Activated CD4-positive, alpha-beta T cell treated with anti-CD3 and anti-CD28 coated beads, Interleukin-2, amount 10 ng/mL, durations not matched to agents 24 days and 14 days (primary cell): ENCODE measurements at regions of chr15 and their contacts with region 1.

Region 1: GRCh38 chr15:51162865-51163762 is 68.4 kb upstream of the TNFAIP8L3 start:
- DNase-seq: peak; percentile 88
- H3K4me3 Mint-ChIP-seq: no peak overlapping the region
- H3K27ac Mint-ChIP-seq: no peak overlapping the region
- H3K4me1 Mint-ChIP-seq: peaks cover 6% of the 10 kb centered on the region
- H3K27me3 Mint-ChIP-seq: peaks cover 8% of the 10 kb centered on the region

Region 2: GRCh38 chr15:51192521-51193280 is 29.6 kb after region 1 on chr15:
- intact Hi-C with region 1: loop called (anchors 1 kb)
- DNase-seq: peak; percentile 93
- H3K4me3 Mint-ChIP-seq: no peak overlapping the region
- H3K27ac Mint-ChIP-seq: no peak overlapping the region
- H3K4me1 Mint-ChIP-seq: no peaks in the 10 kb centered on the region
- H3K27me3 Mint-ChIP-seq: peaks cover 34% of the 10 kb centered on the region

Region 3: GRCh38 chr15:51281368-51281967 is 118.4 kb after region 1 on chr15:
- intact Hi-C with region 1: loop called (anchors 2 kb)
- DNase-seq: peak; percentile 69
- H3K4me3 Mint-ChIP-seq: no peak overlapping the region
- H3K27ac Mint-ChIP-seq: no peak overlapping the region
- H3K4me1 Mint-ChIP-seq: peaks cover 10% of the 10 kb centered on the region
- H3K27me3 Mint-ChIP-seq: peaks cover 15% of the 10 kb centered on the region

Region 4: DNA sequence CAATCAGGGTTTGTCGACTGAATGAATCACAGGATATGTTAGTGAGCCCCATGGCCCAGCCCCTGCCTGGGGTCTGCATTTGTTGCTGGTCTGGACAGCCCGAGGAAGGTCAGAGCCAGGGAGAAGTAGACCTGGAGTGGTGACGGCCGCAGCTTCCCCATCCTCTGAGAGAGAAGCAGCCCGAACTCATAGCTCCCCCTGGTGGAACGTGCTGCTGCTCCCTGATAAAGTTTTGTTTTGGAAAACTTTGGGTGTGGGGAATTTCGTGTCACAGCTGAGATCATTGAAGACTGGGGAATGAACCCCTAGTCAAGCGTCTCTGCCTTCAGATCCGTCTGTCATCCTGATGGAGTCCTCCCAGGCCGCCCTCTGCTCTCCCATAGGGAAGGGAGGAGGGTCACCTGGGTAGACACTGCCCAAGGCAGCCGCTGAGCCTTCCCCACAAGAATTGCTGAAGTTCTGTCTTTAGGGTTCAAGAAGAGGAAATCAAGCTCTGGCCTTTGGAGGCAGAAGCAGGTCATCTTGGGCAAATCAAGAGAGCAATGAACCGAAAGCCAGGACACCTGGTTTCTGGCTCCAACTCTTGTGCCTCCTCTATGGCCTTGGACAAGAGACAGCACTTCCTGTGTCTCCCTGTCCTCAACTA is 238.9 kb after region 1 on chr15:
- intact Hi-C with region 1: loop called (anchors 2 kb)
- DNase-seq: no peak
- H3K4me3 Mint-ChIP-seq: no peak overlapping the region
- H3K27ac Mint-ChIP-seq: no peak overlapping the region
- H3K4me1 Mint-ChIP-seq: no peaks in the 10 kb centered on the region
- H3K27me3 Mint-ChIP-seq: peaks cover 22% of the 10 kb centered on the region